K562 (cell line): ENCODE measurements at regions of chr12 and their contacts with region 1.

Region 1: GRCh38 chr12:105382771-105383622 is 52.5 kb downstream of the C12orf75 start:
- DNase-seq: peak; percentile 59 to 63 (median 62)
- ATAC-seq: peak; percentile 88
- H3K4me3 ChIP-seq: no peak overlapping the region
- H3K27ac ChIP-seq: no peak overlapping the region
- H3K4me1 ChIP-seq: peaks cover 0 to 5% of the 10 kb centered on the region in 2 experiments; a peak in 1 of 5 replicates
- H3K27me3 ChIP-seq: peaks cover 0 to 24% of the 10 kb centered on the region in 2 experiments; a peak in 4 of 5 replicates
- CTCF ChIP-seq: peak; percentile 66 to 85 (median 76)
- EP300 ChIP-seq: no peak
- POLR2A ChIP-seq: no peak
- RAD21 ChIP-seq: peak; percentile 84 to 86

Region 2: GRCh38 chr12:104201238-104202001 is 1181.6 kb before region 1 on chr12:
- CTCF ChIA-PET with region 1: interaction called, 7 read pairs
- POLR2A ChIA-PET with region 1: no interaction called
- in situ Hi-C with region 1: loop called (anchors 25 kb)
- intact Hi-C with region 1: loop called (anchors 5 kb)
- DNase-seq: peak; percentile 61 to 71 (median 63)
- ATAC-seq: peak; percentile 91
- H3K4me3 ChIP-seq: no peak overlapping the region
- H3K27ac ChIP-seq: no peak overlapping the region
- H3K4me1 ChIP-seq: no peaks in the 10 kb centered on the region
- H3K27me3 ChIP-seq: peaks cover 0 to 8% of the 10 kb centered on the region in 2 experiments; a peak in 2 of 5 replicates
- CTCF ChIP-seq: peak; percentile 76 to 90 (median 88)
- EP300 ChIP-seq: no peak
- POLR2A ChIP-seq: no peak
- RAD21 ChIP-seq: peak; percentile 90 to 93

Region 3: DNA sequence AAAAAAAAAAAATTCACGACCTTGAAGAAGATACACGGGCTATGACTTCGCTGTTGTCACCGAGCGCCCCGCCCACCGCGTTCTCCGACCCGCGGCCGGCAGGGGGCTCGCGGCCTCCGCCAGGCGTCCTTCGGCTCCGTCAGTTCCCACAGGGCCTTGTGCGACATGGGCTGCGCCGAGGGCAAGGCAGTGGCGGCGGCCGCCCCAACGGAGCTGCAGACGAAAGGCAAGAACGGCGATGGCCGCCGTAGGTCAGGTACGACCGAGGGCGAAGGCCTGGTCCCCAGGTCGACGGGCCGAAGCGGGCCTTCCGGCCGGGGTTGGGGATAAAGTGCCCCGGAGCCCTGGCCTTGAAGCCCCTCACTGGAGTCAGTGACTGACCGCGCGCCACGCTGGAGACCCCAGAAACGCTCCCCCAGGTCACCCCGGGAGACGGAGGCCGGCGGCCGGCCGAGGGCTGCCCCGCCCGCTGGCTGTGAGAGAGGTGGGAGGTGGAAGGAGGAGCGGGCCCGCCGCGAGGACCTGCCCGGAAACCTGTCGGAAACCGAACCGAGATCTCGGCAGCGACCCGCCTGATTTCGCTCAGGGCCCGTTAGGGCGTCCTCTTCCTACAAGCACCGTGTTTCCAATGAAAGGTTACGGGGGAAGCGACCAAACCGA is 1167.2 kb before region 1 on chr12 and contains the start of gene TXNRD1:
- CTCF ChIA-PET with region 1: no interaction called
- POLR2A ChIA-PET with region 1: interaction called, 3 read pairs
- in situ Hi-C with region 1: loop called (anchors 25 kb)
- intact Hi-C with region 1: no loop called
- DNase-seq: peak; percentile 84 to 90 (median 86)
- ATAC-seq: peak; percentile 99
- H3K4me3 ChIP-seq: peak within 1 kb of the TSS; percentile 20
- H3K27ac ChIP-seq: peak within 1 kb of the TSS; percentile 13; the same call in 1 of the 3 replicates
- H3K4me1 ChIP-seq: peaks cover 11% of the 10 kb centered on the region in 2 experiments; a peak in 4 of 5 replicates
- H3K27me3 ChIP-seq: no peaks in the 10 kb centered on the region; a peak in 1 of 5 replicates
- CTCF ChIP-seq: peak; percentile 92 to 94 (median 93)
- EP300 ChIP-seq: no peak
- POLR2A ChIP-seq: 0 out of 2 replicates have a peak, but pooled peaks have one; percentile 51
- RAD21 ChIP-seq: peak; percentile 90 to 94
- polyA plus RNA-seq, gene TXNRD1: 114 to 189 TPM

Region 4: GRCh38 chr12:104986022-104986941 is 396.7 kb before region 1 on chr12 and contains the start of gene NOPCHAP1:
- CTCF ChIA-PET with region 1: no interaction called
- POLR2A ChIA-PET with region 1: no interaction called
- in situ Hi-C with region 1: no loop called
- intact Hi-C with region 1: loop called (anchors 2 kb)
- DNase-seq: peak; percentile 93 to 95 (median 94)
- ATAC-seq: peak; percentile 100
- H3K4me3 ChIP-seq: peak within 1 kb of the TSS; percentile 86
- H3K27ac ChIP-seq: peak within 1 kb of the TSS; percentile 70
- H3K4me1 ChIP-seq: peaks cover 0 to 10% of the 10 kb centered on the region in 2 experiments; a peak in 2 of 5 replicates
- H3K27me3 ChIP-seq: no peaks in the 10 kb centered on the region
- CTCF ChIP-seq: no peak
- EP300 ChIP-seq: no peak
- POLR2A ChIP-seq: peak; percentile 91
- RAD21 ChIP-seq: no peak
- polyA plus RNA-seq, gene NOPCHAP1: 98.7 to 108 TPM

Region 5: GRCh38 chr12:105279460-105280056 is 103.4 kb before region 1 on chr12:
- CTCF ChIA-PET with region 1: interaction called, 3 read pairs
- POLR2A ChIA-PET with region 1: no interaction called
- in situ Hi-C with region 1: no loop called
- intact Hi-C with region 1: loop called (anchors 5 kb)
- DNase-seq: peak; percentile 15 to 43 (median 26)
- ATAC-seq: peak; percentile 87
- H3K4me3 ChIP-seq: no peak overlapping the region
- H3K27ac ChIP-seq: no peak overlapping the region
- H3K4me1 ChIP-seq: no peaks in the 10 kb centered on the region
- H3K27me3 ChIP-seq: peaks cover 0 to 4% of the 10 kb centered on the region in 2 experiments; a peak in 1 of 5 replicates
- CTCF ChIP-seq: peak; percentile 62 to 72 (median 66)
- EP300 ChIP-seq: no peak
- POLR2A ChIP-seq: no peak
- RAD21 ChIP-seq: peak; percentile 9 to 48; a peak in 2 of 4 replicates